Prostate gland (tissue), 2 donors: ENCODE measurements at regions of chr17 and their contacts with region 1.

Region 1: GRCh38 chr17:19447085-19447583 is 36.1 kb downstream of the RNF112 start:
- DNase-seq: peak; percentile 78
- H3K4me3 ChIP-seq: no peak overlapping the region
- H3K27ac ChIP-seq: peak overlapping the region in 1 of 2 donors; percentile 52
- H3K4me1 ChIP-seq: no peaks in the 10 kb centered on the region
- H3K27me3 ChIP-seq: no peaks in the 10 kb centered on the region
- CTCF ChIP-seq: peak; percentile 93 to 97 (median 96)
- POLR2A ChIP-seq: no peak

Region 2: DNA sequence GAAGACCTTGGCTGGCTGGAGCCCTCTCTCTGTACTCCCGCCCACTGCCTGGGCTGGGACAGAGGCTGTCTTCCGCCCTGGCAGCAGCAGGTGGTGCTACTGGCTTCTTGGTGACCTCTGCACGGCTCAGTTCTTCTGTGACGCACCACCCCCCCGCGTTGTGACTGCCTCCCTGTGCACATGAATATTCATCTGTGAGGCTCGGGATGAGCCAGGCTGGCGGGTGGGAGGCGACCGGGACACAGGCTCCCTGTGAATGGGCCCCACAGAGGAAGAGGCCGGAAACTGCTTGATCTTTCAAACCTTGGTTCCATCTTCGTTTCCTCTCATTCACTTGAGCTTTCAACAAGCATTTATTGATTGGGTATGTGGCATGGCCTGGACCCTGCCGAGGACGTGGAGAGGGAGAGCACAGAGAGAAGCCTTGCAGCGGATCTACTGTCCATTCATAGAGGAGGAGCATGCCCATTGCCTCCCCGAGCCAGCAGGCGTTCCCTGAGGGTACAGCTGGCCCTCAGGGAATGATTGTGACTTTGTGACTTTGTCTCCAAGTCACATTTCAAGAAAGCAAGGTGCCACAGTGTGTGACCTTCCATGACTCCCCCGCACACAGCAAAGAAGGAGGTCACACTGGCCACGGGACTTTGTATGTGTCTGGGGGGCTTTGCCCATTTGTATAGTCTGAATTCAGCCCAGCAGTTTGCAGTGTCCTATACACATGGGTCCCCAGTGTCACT is 129.6 kb before region 1 on chr17:
- intact Hi-C with region 1: loop called (anchors 5 kb)
- DNase-seq: no peak
- H3K4me3 ChIP-seq: no peak overlapping the region
- H3K27ac ChIP-seq: peak overlapping the region; percentile 13 to 28
- H3K4me1 ChIP-seq: no peaks in the 10 kb centered on the region
- H3K27me3 ChIP-seq: no peaks in the 10 kb centered on the region
- CTCF ChIP-seq: peak in 2 of 4 experiments; percentile 16 to 30
- POLR2A ChIP-seq: no peak

Region 3: GRCh38 chr17:19362277-19363113 is 84.6 kb before region 1 on chr17 and contains the start of gene B9D1:
- intact Hi-C with region 1: loop called (anchors 1 kb)
- DNase-seq: peak; percentile 91
- H3K4me3 ChIP-seq: peak within 1 kb of the TSS; percentile 61 to 69
- H3K27ac ChIP-seq: peak within 1 kb of the TSS; percentile 86 to 87
- H3K4me1 ChIP-seq: no peaks in the 10 kb centered on the region
- H3K27me3 ChIP-seq: no peaks in the 10 kb centered on the region
- CTCF ChIP-seq: peak; percentile 98 to 100 (median 100)
- POLR2A ChIP-seq: no peak
- total RNA-seq, gene B9D1: 15.7 to 28.8 TPM

Region 4: DNA sequence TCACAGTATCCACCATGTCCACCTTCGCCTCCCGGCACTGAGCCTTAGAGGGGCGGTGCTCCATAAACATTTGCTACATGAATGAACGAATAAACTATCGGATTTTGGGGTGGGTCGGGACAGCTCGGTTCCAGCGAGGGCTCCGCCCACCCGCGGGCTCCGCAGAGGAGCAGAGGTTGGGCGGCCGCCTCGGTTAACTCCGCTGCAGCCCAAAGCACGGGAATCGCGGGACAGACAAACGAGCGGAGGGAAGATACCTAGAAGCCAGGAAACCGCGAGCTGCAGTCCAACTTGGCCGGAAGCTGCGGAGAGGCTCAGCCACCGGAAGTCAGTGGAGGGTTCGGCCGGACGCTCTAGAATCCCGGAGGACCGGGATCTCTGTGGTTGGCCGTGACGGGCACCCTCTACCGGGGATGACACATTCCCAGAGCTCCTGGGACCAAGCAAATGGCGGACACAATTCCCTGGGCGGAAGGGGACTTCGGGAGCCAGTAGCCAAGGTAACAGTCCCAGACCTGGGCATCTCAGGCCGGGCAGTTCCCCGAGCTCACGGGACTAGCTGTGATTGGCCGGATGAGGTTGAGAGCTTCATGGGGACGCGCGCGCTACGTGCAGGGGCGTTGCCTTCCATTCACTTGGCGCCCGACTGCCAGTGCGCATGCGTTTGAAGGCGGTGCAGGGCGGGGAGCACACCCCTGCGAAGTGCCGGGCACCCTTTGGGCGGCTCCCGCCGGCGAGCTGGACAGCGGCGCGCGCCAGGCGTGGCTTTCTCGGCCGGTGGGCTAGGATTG is 69.3 kb before region 1 on chr17:
- intact Hi-C with region 1: loop called (anchors 5 kb)
- DNase-seq: peak; percentile 98
- H3K4me3 ChIP-seq: peak overlapping the region; percentile 64 to 68
- H3K27ac ChIP-seq: peak overlapping the region; percentile 90
- H3K4me1 ChIP-seq: peaks cover 12% of the 10 kb centered on the region
- H3K27me3 ChIP-seq: no peaks in the 10 kb centered on the region
- CTCF ChIP-seq: peak in 1 of 4 experiments; percentile 19
- POLR2A ChIP-seq: peak; percentile 56

Region 5: GRCh38 chr17:19410875-19411620 is 36.1 kb before region 1 on chr17 and contains the start of gene RNF112:
- intact Hi-C with region 1: loop called (anchors 2 kb)
- DNase-seq: no peak
- H3K4me3 ChIP-seq: peak within 1 kb of the TSS; percentile 5 to 11
- H3K27ac ChIP-seq: peak within 1 kb of the TSS in 1 of 2 donors; percentile 20
- H3K4me1 ChIP-seq: no peaks in the 10 kb centered on the region
- H3K27me3 ChIP-seq: no peaks in the 10 kb centered on the region
- CTCF ChIP-seq: no peak
- POLR2A ChIP-seq: no peak
- total RNA-seq, gene RNF112: 2.3 to 6.6 TPM

Region 6: GRCh38 chr17:19590451-19590850 is 143.3 kb after region 1 on chr17:
- intact Hi-C with region 1: no loop called
- DNase-seq: no peak
- H3K4me3 ChIP-seq: no peak overlapping the region
- H3K27ac ChIP-seq: no peak overlapping the region
- H3K4me1 ChIP-seq: no peaks in the 10 kb centered on the region
- H3K27me3 ChIP-seq: no peaks in the 10 kb centered on the region
- CTCF ChIP-seq: no peak
- POLR2A ChIP-seq: no peak